ENCODE measurements at regions of chr10 and their contacts with region 1.

Region 1: DNA sequence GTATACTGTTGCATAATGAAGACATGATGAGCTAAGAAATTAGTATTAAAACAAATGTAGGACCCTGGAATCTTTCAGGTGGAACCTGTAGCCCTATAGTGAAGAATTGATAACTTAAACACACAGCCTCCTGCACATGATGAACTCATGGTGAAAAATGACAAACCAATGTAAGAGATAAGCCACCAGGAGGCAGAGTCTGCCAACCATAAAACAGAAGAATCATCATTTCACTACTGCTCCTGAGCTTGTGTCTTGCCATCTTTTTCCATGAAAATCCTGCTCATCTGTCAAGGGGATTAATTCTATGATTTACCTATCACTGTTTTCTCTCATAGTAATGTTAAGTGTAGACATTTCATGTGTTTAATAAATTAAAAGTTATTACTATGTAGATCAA is 363.9 kb downstream of the MALRD1 start:
- DNase-seq: no peak
- H3K4me3 ChIP-seq: no peak overlapping the region
- H3K27ac ChIP-seq: no peak overlapping the region
- H3K4me1 ChIP-seq: no peaks in the 10 kb centered on the region
- H3K27me3 ChIP-seq: no peaks in the 10 kb centered on the region
- CTCF ChIP-seq: peak; percentile 37 to 54 (median 49)
- EP300 ChIP-seq: no peak
- POLR2A ChIP-seq: no peak

Region 2: GRCh38 chr10:19788075-19788686 is 375.6 kb after region 1 on chr10:
- in situ Hi-C with region 1: loop called in 2 of 4 experiments (anchors 25 kb)
- intact Hi-C with region 1: no loop called
- DNase-seq: peak; percentile 23
- H3K4me3 ChIP-seq: no peak overlapping the region
- H3K27ac ChIP-seq: no peak overlapping the region
- H3K4me1 ChIP-seq: no peaks in the 10 kb centered on the region
- H3K27me3 ChIP-seq: no peaks in the 10 kb centered on the region
- CTCF ChIP-seq: peak; percentile 59 to 86 (median 68)
- EP300 ChIP-seq: no peak
- POLR2A ChIP-seq: no peak